ENCODE measurements at regions of chr1 and their contacts with region 1.

Region 1: GRCh38 chr1:117681143-117681542 is 75.3 kb downstream of the TENT5C start:
- DNase-seq: no peak
- H3K4me3 Mint-ChIP-seq: no peak overlapping the region
- H3K27ac Mint-ChIP-seq: no peak overlapping the region
- H3K4me1 Mint-ChIP-seq: no peaks in the 10 kb centered on the region
- H3K27me3 Mint-ChIP-seq: peaks cover 13% of the 10 kb centered on the region

Region 2: GRCh38 chr1:117710710-117711109 is 29.6 kb after region 1 on chr1:
- intact Hi-C with region 1: loop called (anchors 1 kb)
- DNase-seq: no peak
- H3K4me3 Mint-ChIP-seq: no peak overlapping the region
- H3K27ac Mint-ChIP-seq: no peak overlapping the region
- H3K4me1 Mint-ChIP-seq: no peaks in the 10 kb centered on the region
- H3K27me3 Mint-ChIP-seq: peaks cover 14% of the 10 kb centered on the region